ENCODE measurements at regions of chr12 and their contacts with region 1.

Region 1: DNA sequence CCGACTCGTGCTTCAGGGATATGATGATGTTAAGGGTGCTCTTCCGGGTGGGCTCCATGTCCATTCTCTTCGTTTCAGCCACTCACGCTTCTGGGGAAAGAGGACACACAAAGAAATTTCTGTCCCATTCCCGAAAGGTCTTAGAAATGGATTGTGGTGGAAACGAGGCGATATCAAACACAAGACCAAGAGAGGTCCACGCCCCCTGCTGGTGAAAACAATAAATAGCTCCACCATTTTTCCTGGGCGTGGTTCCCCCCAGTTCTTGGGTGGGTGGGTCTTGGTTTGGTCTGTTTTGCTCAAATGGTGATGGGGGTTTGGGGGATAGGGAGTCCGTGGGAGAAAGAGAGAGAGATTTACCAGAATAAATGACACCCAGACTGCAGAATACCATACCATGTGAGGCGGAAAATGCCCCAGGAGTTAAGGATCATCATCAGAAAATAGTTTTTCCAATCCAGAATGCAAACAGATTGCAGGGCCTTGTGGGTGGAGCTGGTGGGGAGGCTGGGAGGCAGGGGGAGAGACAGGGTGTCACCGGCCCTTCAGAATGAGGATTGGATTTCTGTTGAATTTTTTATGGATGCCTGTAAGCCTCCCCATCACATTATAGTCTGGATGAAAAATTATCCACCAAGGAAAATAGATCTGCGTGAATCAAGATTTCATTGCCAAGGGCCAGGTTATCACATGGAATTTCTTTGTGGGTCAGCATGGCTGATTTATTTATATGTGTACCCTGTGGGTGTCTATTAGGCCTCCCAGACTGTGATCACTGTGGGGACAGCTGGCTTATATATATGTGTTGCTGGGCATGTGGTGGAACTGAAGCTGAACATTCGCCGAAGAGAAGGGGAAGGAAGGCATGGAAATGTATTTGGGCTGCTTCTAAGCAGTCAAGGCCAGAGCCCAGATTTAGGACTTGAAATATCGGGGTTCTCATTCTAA is 55.8 kb downstream of the SRRM4 start:
- DNase-seq: peak; percentile 57 to 77 (median 68)
- ATAC-seq: peak; percentile 59; the same call in 1 of the 3 replicates
- H3K4me3 ChIP-seq: no peak overlapping the region
- H3K27ac ChIP-seq: no peak overlapping the region
- H3K4me1 ChIP-seq: no peaks in the 10 kb centered on the region
- H3K27me3 ChIP-seq: no peaks in the 10 kb centered on the region; a peak in 1 of 5 replicates
- CTCF ChIP-seq: peak; percentile 68 to 78 (median 72)
- EP300 ChIP-seq: no peak
- POLR2A ChIP-seq: no peak
- RAD21 ChIP-seq: peak; percentile 23 to 55; a peak in 3 of 4 replicates

Region 2: GRCh38 chr12:118866346-118866745 is 170.8 kb before region 1 on chr12:
- CTCF ChIA-PET with region 1: no interaction called
- POLR2A ChIA-PET with region 1: no interaction called
- in situ Hi-C with region 1: no loop called
- intact Hi-C with region 1: loop called (anchors 10 kb)
- DNase-seq: peak in 1 of 4 experiments; percentile 2
- ATAC-seq: no peak
- H3K4me3 ChIP-seq: no peak overlapping the region
- H3K27ac ChIP-seq: no peak overlapping the region
- H3K4me1 ChIP-seq: no peaks in the 10 kb centered on the region
- H3K27me3 ChIP-seq: no peaks in the 10 kb centered on the region
- CTCF ChIP-seq: no peak
- EP300 ChIP-seq: no peak
- POLR2A ChIP-seq: no peak
- RAD21 ChIP-seq: no peak

Region 3: DNA sequence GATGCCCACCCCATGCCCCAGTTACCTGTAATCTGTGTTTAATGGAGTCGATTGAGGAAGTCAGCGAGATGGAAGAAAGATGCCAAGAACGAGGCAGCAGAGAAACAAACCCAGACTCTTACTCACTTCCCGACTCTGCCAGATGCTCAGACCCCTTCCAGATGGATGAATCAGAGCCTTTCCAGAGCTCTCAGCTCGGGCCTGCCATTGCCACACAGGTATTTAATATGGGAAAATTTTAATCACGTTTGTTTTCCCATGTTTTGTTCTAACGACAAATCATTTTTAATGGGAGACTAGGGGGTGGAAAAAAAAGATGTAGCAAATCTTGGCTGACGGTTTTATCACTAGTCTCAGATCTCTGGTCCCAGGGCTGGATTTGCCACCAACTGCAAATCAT is 128.3 kb before region 1 on chr12:
- CTCF ChIA-PET with region 1: no interaction called
- POLR2A ChIA-PET with region 1: no interaction called
- in situ Hi-C with region 1: no loop called
- intact Hi-C with region 1: no loop called
- DNase-seq: no peak
- ATAC-seq: no peak
- H3K4me3 ChIP-seq: no peak overlapping the region
- H3K27ac ChIP-seq: no peak overlapping the region
- H3K4me1 ChIP-seq: no peaks in the 10 kb centered on the region
- H3K27me3 ChIP-seq: no peaks in the 10 kb centered on the region
- CTCF ChIP-seq: no peak
- EP300 ChIP-seq: no peak
- POLR2A ChIP-seq: no peak
- RAD21 ChIP-seq: no peak

Region 4: GRCh38 chr12:118946256-118946655 is 90.9 kb before region 1 on chr12:
- CTCF ChIA-PET with region 1: no interaction called
- POLR2A ChIA-PET with region 1: no interaction called
- in situ Hi-C with region 1: no loop called
- intact Hi-C with region 1: no loop called
- DNase-seq: no peak
- ATAC-seq: no peak
- H3K4me3 ChIP-seq: no peak overlapping the region
- H3K27ac ChIP-seq: no peak overlapping the region
- H3K4me1 ChIP-seq: no peaks in the 10 kb centered on the region
- H3K27me3 ChIP-seq: peaks cover 0 to 7% of the 10 kb centered on the region in 2 experiments; a peak in 1 of 5 replicates
- CTCF ChIP-seq: no peak
- EP300 ChIP-seq: no peak
- POLR2A ChIP-seq: no peak
- RAD21 ChIP-seq: no peak